ENCODE measurements at regions of chr14 and their contacts with region 1.

Region 1: DNA sequence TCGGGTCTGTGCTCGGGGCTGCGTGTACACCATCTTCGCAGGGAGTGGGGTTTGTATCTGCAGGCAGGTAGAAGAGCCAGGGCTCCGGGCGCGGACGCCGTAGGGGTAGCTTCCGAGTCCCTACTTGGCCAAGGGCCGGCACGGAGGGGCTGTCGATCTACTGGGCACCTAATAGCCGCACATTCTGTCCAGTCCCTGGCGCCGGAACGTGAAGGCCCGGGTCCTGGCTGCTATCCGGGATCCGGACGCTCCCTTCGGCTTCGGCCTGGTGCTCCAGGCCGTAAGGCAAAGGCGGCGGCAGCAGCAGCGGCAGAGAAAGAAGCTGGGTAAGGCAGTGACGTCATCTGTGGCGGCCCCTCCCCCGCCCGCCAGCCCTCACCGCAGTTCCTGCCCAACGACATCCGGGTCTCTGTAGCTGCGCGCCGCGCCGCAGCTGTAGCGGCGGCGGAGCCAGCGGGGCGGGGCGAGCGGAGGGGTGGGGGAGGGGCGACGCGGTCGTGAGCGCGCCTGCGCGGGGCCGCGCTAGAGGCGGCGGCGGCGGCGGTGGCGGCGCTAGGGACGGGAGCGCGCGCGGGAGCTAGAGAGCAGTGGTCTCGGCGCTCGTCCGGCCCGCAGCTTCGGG is at the start of gene PPM1A:
- DNase-seq: peak; percentile 97
- H3K4me3 Mint-ChIP-seq: peak within 1 kb of the TSS; percentile 94
- H3K27ac Mint-ChIP-seq: peak within 1 kb of the TSS; percentile 100
- H3K4me1 Mint-ChIP-seq: peaks cover 50% of the 10 kb centered on the region
- H3K27me3 Mint-ChIP-seq: no peaks in the 10 kb centered on the region
- total RNA-seq, gene PPM1A: 44.0 to 47.3 TPM

Region 2: GRCh38 chr14:59189786-59190771 is 1058.7 kb before region 1 on chr14:
- CTCF ChIA-PET with region 1: no interaction called
- POLR2A ChIA-PET with region 1: no interaction called
- intact Hi-C with region 1: loop called (anchors 2 kb)
- DNase-seq: peak; percentile 86
- H3K4me3 Mint-ChIP-seq: peak overlapping the region; percentile 93
- H3K27ac Mint-ChIP-seq: peak overlapping the region; percentile 49
- H3K4me1 Mint-ChIP-seq: peaks cover 6% of the 10 kb centered on the region
- H3K27me3 Mint-ChIP-seq: peaks cover 3% of the 10 kb centered on the region

Region 3: DNA sequence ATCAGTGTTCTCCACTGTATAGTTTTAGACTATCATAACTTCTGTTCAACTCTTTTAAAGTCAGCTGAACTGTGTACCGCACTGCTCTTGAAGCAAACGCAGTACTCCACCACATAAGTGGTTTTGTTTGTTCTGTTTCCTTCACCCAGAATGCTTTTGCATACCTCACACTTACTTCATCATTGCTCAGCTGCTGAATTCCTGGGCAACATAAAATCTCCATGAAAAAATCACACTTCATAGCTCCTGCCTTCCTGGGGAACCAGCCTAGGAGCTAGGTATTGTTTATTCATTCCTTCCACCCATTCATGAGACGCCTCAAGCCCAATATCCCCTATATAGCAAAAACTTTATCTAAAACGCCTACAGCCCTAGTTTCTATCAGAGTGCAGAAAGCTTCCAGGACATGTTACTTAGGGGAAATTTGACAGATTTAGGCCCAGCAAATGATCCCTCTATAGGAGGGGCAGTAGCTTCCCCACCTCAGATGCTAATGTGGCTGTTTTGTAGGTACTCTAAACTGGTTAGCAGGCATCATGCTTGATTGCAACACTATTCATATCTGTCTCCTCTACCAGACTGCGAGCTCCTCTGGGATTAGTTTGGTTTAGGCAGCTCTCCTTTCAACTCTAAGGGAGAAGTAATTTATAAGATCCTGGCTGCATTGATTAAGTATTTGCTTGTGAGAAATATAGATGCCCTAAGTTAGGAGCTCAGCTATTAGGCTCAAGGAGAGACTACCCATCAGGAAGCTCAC is 284.4 kb before region 1 on chr14:
- CTCF ChIA-PET with region 1: interaction called, 8 read pairs
- POLR2A ChIA-PET with region 1: interaction called, 4 read pairs
- intact Hi-C with region 1: loop called (anchors 1 kb)
- DNase-seq: no peak
- H3K4me3 Mint-ChIP-seq: peak overlapping the region; percentile 74
- H3K27ac Mint-ChIP-seq: peak overlapping the region; percentile 87
- H3K4me1 Mint-ChIP-seq: peaks cover 12% of the 10 kb centered on the region
- H3K27me3 Mint-ChIP-seq: no peaks in the 10 kb centered on the region

Region 4: DNA sequence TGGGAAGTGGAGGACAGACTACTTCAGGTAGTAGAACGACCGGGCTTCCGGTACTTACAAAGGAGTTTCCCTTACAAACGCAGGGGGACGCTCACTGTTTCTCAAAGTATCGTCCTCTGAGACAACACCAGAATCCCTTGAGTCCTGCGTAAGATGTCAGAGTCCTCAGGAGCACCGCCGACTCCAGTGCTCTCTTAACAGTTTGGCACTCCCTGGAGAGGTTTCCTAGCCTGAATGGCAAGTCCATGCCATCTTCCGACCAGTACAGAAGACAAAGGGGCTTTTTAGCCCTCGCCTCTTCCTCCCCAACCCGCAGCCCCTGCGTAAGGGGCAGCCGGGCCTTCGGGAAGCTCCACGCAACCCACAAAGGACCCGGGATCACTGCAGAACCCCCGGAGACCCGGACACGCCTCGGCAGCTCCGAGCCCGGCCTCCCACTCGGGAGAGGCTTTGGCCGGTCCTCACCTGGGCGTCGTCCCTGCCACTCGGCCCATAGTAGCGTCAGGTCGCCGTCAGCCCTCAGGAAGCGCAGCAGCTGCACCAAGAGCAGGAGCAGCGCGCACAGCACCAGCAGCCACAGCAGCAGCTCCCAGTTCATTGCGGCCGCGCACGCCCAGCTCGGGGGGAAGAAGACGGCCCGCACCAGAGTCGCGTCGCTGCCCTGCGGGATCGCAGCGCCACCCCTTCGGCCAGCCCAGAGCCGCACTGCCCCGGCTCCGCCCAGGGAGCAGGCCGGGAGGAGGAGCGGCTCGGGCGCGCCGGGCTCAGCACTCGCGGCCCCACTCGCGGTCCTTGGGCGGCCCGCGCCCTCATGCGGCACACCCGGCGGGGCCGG is 83.9 kb before region 1 on chr14 and contains the start of gene DHRS7:
- CTCF ChIA-PET with region 1: no interaction called
- POLR2A ChIA-PET with region 1: interaction called, 12 read pairs
- intact Hi-C with region 1: loop called (anchors 1 kb)
- DNase-seq: peak; percentile 79
- H3K4me3 Mint-ChIP-seq: peak within 1 kb of the TSS; percentile 94
- H3K27ac Mint-ChIP-seq: peak within 1 kb of the TSS; percentile 97
- H3K4me1 Mint-ChIP-seq: peaks cover 37% of the 10 kb centered on the region
- H3K27me3 Mint-ChIP-seq: no peaks in the 10 kb centered on the region
- total RNA-seq, gene DHRS7: 70.3 to 74.7 TPM

Region 5: DNA sequence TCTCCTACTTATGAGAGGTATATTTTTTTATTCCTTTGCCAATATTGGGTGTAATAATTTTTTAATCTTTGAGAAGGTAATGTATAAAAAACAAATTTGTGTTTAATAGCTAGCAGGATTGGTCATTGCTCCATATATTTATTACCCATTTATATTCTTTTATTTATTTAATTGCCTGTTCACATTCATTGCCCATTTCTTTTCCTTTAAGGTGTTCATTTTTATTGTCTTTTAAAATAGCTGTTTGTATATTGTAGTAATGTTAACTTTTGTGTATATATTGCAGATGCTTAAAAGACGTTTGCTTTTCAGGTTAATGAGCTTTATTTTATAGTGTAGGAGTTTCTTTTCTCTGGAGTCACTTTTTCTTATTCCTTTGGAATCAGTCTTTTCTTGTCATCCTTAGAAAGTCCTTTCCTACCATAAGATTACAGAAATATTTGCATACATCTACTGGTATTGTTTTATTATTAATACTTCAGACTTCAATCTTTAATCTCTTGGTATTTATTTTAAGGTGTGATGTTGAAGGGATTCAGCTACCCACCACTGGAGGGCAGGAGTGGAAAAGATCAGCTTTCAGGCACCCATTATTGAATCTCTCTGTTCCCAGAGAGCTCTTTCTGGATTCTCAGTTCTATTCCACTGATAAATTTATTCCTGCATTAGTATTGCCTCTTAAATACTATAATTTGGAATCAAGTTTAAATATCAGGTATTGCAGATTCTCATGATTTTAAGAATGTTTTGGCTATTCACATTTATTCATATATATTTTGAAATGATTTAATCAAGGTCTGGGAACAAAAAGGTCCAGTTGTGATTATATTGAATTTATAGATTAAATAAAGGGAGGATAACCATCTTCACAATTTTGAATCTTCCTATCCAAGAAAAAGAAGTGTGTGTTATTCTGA is 17.5 kb after region 1 on chr14:
- CTCF ChIA-PET with region 1: interaction called, 15 read pairs
- POLR2A ChIA-PET with region 1: interaction called, 3 read pairs
- intact Hi-C with region 1: loop called (anchors 2 kb)
- DNase-seq: peak; percentile 19
- H3K4me3 Mint-ChIP-seq: no peak overlapping the region
- H3K27ac Mint-ChIP-seq: no peak overlapping the region
- H3K4me1 Mint-ChIP-seq: peaks cover 18% of the 10 kb centered on the region
- H3K27me3 Mint-ChIP-seq: no peaks in the 10 kb centered on the region

Region 6: GRCh38 chr14:60980811-60981632 is 732.2 kb after region 1 on chr14 and contains the starts of genes SLC38A6 and TRMT5:
- CTCF ChIA-PET with region 1: no interaction called
- POLR2A ChIA-PET with region 1: no interaction called
- intact Hi-C with region 1: loop called (anchors 2 kb)
- DNase-seq: peak; percentile 95
- H3K4me3 Mint-ChIP-seq: no peak within 1 kb of the TSS
- H3K27ac Mint-ChIP-seq: no peak within 1 kb of the TSS
- H3K4me1 Mint-ChIP-seq: peaks cover 21% of the 10 kb centered on the region
- H3K27me3 Mint-ChIP-seq: no peaks in the 10 kb centered on the region
- total RNA-seq, gene SLC38A6: 5.4 to 5.6 TPM
- total RNA-seq, gene TRMT5: 18.2 to 18.3 TPM

Measured in activated CD4-positive, alpha-beta memory T cell treated with anti-CD3 and anti-CD28 coated beads for 36 hours (primary cell).